Astrocyte of the cerebellum (primary cell): ENCODE measurements at regions of chr1 and their contacts with region 1.

Region 1: DNA sequence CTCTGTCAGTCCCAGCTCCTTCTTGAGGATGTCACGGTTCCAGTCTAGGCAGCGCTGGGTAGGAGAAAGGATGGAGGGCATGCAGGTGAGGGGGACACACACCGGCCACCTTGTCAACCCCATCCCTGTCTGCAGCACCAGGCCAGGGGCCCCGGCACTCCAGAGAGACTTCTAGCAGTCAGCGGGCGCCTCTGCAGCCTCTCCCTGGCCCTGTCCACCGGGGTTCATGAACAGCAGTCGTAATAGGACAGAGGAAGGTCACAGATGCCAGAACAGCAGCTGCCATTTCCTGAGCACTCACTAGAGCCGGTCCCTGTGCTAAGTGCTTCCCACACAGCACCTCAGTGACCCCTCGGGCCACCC is 16.3 kb upstream of the SDHB start:
- DNase-seq: no peak
- H3K4me3 ChIP-seq: no peak overlapping the region
- CTCF ChIP-seq: no peak

Region 2: GRCh38 chr1:17028662-17029188 is 41.4 kb before region 1 on chr1:
- in situ Hi-C with region 1: no loop called
- DNase-seq: no peak
- H3K4me3 ChIP-seq: no peak overlapping the region
- CTCF ChIP-seq: no peak

Region 3: DNA sequence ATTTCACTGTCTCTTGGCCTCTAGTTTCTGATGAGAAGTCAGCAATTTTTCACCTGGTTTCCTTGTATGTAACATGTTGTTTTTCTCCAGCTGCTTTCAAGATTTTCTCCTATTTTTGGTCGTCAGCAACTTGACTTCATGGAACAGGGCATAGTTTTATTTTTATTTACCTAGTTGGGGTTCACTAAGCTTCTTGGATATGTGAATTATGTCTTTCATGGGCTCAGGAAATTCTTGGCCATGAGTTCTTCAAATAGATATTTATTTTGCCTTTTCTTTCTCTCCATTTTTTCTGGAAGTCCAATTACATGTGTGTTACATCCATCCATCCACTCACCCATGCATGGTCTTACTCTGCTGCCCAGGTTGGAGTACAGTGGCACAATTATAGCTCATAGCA is 30.0 kb before region 1 on chr1:
- in situ Hi-C with region 1: no loop called
- DNase-seq: no peak
- H3K4me3 ChIP-seq: no peak overlapping the region
- CTCF ChIP-seq: no peak

Region 4: DNA sequence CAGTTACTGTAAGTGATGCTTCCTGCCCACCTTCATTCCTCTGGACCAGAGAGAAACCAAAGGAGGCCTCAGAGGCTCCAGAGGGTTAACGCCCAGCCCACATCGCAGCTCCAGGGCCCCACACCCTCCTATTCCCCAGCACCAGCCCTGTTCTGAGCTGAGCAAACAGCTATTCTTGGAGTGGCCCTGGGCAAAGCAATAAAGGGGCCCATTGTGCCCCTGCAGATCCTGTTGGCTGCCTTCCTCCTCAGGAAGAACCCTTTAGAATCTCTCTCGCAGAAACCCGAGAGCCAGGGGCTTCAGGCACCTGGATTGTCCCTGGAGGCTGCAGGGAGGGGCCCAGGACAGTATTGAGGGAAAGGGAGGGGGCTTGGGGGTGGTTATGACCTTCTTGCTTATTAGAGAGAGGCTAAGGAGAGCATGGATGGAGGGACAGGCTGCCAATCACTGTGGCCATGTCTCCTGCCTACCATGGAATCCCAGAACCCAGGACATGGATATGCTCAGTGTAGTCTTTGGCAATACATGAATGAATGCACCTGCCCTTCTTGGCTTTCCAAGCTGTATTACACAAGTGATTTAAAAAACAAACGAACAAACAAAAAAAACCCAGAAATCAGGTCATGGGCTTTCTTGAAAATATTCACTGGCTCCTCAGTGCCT is 39.9 kb after region 1 on chr1:
- in situ Hi-C with region 1: loop called (anchors 5 kb)
- DNase-seq: no peak
- H3K4me3 ChIP-seq: no peak overlapping the region
- CTCF ChIP-seq: no peak

Region 5: DNA sequence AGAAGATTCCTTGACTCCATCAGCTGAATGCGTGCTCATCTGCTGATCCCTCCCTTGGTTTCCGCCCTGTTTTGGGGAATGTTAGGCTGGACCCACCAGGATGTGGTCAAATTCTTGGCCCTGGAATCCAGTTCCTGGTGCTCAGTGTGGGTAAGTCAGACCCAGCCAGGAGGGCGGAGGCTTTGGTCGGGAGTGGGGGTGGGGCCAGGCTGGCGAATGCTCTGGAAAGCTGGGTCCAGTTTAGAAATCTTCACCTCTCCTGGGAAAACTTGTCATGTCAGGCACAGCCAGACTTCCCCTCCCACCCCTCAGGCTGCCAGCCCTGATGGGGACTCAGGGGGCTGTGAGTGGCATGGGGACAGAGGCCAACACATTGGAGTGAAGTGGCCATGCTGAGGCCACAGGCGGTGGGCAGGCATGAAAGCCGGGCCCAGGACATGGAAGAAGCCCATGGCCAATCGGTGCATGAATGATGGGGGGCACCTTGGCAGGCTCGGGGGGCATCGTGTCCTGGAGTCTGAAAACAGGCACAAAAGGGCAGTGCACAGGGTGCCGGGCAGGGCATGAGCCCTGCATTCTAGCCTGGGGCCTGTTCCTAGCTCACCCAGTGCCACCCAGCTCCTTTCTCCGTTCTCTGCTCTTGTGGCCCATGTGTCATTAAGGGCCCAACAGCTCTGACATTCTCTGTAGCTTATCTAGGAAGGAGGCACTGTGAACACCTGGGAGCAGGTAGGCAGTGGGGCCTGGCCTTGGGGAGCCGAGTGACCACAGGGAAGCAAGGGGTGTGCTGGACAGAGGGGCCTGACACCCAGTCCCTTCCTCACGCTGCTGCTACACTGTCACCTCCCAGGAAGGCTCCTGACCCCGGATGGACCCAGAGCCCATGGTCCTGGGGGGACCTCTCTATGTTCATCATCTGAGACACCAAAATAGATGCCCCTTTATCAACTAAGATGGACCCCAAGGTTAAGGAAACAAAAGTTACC is 120.2 kb after region 1 on chr1:
- in situ Hi-C with region 1: no loop called
- DNase-seq: peak; percentile 93
- H3K4me3 ChIP-seq: no peak overlapping the region
- CTCF ChIP-seq: no peak